WTC11 (cell line): ENCODE measurements at regions of chr20 and their contacts with region 1.

Region 1: DNA sequence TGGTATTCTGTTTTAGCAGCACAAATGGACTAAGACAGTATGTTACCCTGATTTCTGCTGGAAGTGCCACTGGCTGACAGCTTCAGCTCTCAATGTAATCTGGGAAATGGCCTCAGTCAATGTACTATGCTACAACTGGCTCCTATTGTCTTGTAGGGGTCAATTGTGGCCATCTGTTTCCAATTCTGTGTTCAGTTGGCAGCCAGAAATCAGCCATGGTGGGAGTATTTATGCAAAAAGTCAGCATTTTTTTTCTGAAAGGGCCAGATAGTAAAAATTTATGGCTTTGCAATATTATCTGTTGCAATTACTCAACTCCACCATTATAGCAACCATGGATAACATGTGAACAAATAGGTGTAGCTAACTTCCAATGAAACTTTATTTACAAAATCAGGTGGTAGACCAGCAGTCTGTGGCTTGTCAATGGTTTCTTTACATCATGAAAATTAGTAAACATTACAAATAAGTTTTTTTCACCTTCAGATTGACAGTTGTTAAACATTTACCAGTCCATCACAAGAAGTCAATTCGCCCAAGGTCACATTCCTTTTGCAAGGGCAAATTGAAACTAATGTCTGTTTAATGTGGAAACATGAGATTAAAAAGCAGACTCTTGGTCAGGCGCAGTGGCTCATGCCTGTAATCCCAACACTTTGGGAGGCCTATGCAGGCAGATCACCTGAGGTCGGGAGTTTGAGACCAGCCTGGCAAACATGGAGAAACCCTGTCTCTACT is 58.3 kb upstream of the TSHZ2 start:
- DNase-seq: no peak
- ATAC-seq: no peak
- H3K4me3 Mint-ChIP-seq: no peak overlapping the region
- H3K27ac Mint-ChIP-seq: no peak overlapping the region
- H3K4me1 Mint-ChIP-seq: no peaks in the 10 kb centered on the region
- H3K27me3 Mint-ChIP-seq: no peaks in the 10 kb centered on the region
- CTCF ChIP-seq: no peak

Region 2: GRCh38 chr20:52869698-52870501 is 43.9 kb before region 1 on chr20:
- CTCF ChIA-PET with region 1: no interaction called
- POLR2A ChIA-PET with region 1: interaction called, 10 read pairs
- DNase-seq: no peak
- ATAC-seq: no peak
- H3K4me3 Mint-ChIP-seq: no peak overlapping the region
- H3K27ac Mint-ChIP-seq: no peak overlapping the region
- H3K4me1 Mint-ChIP-seq: no peaks in the 10 kb centered on the region
- H3K27me3 Mint-ChIP-seq: no peaks in the 10 kb centered on the region
- CTCF ChIP-seq: no peak